ENCODE measurements at regions of chr18 and their contacts with region 1.

Region 1: DNA sequence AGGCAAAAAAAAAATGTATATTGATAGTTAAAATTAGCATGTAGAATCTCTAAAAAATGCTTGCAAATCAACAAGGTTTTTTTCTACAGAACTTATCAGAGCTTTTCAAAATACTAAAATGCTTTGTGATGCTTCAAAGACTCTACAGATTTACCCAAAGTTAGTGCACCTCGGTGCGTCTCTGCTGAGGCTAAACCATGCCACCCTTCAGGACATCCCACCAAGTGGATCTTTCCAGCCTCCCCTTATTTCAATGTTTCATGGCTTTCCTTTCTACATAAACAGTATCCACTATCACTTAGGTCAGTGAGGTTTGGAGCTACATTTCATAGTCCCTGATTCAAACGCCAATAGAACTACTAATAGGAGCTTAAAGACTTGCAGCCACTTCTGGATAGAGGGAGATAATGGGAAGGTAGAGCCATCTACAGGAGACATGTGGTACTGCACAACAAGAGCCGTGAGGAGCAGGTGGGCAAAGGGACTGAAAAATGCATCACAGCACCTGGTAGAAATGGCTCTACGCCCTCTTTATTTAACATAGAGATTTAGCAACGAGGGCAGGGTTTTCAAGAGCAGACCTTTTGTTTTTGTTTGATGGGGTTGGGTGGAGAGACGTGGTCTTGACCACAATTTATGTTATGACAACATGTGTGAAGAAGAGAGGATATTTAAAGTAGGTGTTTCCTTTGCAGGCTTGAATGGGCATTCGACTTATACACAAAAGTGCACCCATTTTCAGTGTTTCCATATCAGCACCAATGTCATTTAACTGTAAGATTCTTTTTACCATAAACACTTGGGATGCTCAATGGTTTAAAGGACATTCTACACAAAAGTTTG is 56.1 kb upstream of the SLC35G4 start:
- DNase-seq: no peak
- H3K4me3 ChIP-seq: no peak overlapping the region
- H3K27ac ChIP-seq: no peak overlapping the region
- H3K4me1 ChIP-seq: no peaks in the 10 kb centered on the region
- H3K27me3 ChIP-seq: no peaks in the 10 kb centered on the region
- CTCF ChIP-seq: peak; percentile 60 to 84 (median 77)
- EP300 ChIP-seq: no peak
- POLR2A ChIP-seq: no peak

Region 2: GRCh38 chr18:10560450-10561045 is 992.8 kb before region 1 on chr18:
- in situ Hi-C with region 1: loop called in 3 of 4 experiments (anchors 25 kb)
- intact Hi-C with region 1: no loop called
- DNase-seq: peak; percentile 59
- H3K4me3 ChIP-seq: peak overlapping the region in 1 of 4 donors; percentile 32
- H3K27ac ChIP-seq: no peak overlapping the region
- H3K4me1 ChIP-seq: peaks cover 0 to 5% (median 5%) of the 10 kb centered on the region in 4 donors
- H3K27me3 ChIP-seq: no peaks in the 10 kb centered on the region
- CTCF ChIP-seq: peak; percentile 68 to 82 (median 76)
- EP300 ChIP-seq: no peak
- POLR2A ChIP-seq: no peak

Region 3: DNA sequence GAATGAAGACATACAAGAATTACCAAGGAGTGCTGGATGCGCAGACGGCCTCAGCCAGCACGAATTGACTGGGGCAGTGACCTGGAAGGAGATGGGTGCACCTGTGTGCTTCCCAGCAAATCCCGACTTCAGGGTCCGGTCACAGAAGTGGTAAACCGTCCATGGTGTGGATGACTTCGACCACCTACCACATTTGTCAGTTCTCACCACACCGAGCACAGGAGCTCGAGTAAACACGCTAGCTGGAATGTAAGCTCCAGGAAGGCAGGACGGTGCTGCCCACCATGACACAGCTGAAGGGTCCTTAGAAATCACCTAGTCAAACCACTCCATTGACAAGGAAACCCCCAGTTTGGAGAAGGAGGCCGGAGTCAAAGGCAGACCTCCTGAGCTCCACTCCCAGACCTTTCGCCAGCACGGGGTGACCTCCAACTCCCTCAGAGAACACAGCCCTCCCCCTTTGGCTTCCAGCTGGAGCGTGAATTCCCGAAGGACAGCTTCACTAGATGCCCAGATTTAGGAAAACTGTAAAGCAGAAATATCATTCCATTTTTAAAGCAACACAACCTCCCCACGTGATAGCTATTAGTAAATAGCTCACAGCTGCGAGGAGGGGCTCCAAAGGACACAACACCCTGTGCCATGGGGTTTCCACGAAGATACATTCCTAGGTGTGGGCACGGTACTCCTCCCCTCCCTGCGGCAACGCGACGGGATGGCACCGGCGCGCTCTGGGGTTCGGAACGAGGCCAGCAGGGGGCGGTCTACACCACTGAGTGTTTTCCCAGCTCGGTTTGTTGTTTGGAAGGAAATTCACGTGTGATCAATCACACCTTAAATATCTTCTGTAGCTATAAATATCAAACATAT is 101.7 kb after region 1 on chr18:
- in situ Hi-C with region 1: loop called in 1 of 4 experiments (anchors 25 kb)
- intact Hi-C with region 1: no loop called
- DNase-seq: peak; percentile 41
- H3K4me3 ChIP-seq: no peak overlapping the region
- H3K27ac ChIP-seq: no peak overlapping the region
- H3K4me1 ChIP-seq: peaks cover 0 to 2% (median 0%) of the 10 kb centered on the region in 4 donors
- H3K27me3 ChIP-seq: peaks cover 10% of the 10 kb centered on the region
- CTCF ChIP-seq: peak; percentile 53 to 78 (median 69)
- EP300 ChIP-seq: no peak
- POLR2A ChIP-seq: no peak

Region 4: DNA sequence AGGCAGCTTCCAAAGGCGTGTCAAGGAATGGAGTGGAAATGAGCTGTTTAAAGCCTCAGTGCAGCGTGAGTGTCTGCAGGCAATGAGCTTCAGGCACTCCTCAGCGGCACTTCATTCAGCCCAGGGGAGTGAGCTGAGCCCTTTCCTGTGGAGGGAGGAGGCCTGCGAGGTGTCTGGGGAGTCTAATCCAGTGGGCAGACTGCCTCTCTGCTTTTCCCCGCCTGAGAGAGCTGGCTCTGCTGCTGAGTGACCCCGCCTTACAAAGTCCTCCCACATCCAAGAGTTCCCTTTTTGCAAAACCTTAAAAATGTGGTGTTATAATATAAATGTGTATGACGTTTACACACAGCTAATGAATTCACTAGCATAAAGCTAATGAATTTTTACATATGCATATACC is 1658.2 kb after region 1 on chr18:
- in situ Hi-C with region 1: no loop called
- intact Hi-C with region 1: no loop called
- DNase-seq: no peak
- H3K4me3 ChIP-seq: no peak overlapping the region
- H3K27ac ChIP-seq: no peak overlapping the region
- H3K4me1 ChIP-seq: peaks cover under 1 to 13% (median 2%) of the 10 kb centered on the region in 4 donors
- H3K27me3 ChIP-seq: no peaks in the 10 kb centered on the region
- CTCF ChIP-seq: no peak
- EP300 ChIP-seq: no peak
- POLR2A ChIP-seq: no peak

Measured in transverse colon (tissue), 4 donors.